BJ (cell line): ENCODE measurements at regions of chr3 and their contacts with region 1.

Region 1: DNA sequence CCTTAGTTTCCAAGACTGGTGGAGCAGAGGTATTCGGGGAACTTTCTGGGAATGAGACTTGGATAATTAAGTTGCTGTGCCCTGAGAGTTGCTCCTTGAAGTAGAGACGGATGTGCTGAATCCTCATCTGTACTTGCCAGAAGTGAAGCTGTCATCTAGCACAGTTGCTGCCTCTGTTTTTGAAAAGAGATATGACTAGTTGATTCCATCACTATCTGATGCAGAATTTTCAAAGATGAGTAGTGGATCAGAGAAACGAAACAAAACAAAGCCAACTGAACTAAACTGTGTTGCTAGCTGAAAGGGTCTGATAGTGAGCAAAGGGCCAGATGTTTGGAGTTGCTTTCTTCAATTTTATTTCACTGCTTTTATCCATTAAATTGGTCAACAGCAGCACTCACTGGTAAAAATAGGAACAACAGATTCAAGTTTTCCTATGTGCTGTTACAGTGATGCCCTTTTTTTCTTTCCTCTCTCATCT is 52.7 kb downstream of the MITF start:
- DNase-seq: no peak
- H3K4me3 ChIP-seq: no peak overlapping the region
- H3K27me3 ChIP-seq: no peaks in the 10 kb centered on the region
- CTCF ChIP-seq: peak; percentile 59

Region 2: DNA sequence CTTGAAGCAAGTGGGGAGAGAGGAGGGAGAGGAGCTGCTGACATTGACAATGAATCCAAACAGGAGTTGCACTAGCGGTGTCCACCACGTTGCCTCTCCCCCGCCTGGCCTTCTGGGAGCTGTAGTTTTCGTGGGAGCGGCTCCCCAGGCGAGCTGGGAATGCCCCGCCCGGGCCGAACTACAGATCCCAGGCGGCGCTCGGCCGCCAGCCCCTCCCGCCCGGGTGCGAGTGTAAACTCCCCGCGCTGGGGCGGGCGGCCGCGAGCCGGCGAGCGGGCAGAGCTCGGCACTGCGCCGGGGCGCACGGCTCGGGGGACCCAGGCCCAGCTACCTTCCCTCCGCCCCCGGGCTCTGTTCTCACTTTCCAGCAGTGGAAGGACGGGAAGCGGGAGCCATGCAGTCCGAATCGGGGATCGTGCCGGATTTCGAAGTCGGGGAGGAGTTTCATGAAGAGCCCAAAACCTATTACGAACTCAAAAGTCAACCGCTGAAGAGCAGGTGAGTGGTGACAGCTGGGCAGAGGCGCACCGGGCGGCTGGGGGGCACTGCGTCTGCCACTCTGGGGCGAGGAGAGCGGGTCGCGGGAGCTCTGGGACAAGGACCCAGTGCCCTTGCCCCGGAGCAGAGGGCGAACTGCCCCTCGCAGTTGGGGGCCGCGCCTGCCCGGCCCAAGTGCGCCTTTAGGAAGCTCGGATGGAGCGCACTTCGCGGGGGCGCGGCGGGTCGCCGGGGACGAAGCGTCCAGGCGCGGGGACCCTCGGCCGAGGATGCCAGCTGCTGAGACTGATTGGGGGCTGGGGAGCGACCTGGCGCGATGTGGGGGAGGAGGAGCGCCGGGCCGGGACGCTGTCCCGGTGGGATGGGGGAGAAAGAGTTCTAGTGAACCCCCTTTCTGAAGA is 52.5 kb before region 1 on chr3 and contains the start of gene MITF:
- CTCF ChIA-PET with region 1: interaction called, 12 read pairs
- POLR2A ChIA-PET with region 1: no interaction called
- DNase-seq: no peak
- H3K4me3 ChIP-seq: peak within 1 kb of the TSS; percentile 93
- H3K27me3 ChIP-seq: peaks cover 1% of the 10 kb centered on the region; the same call in 1 of the 2 replicates
- CTCF ChIP-seq: no peak
- polyA plus RNA-seq, gene MITF: 27.9 and 30.9 TPM in 2 replicates

Region 3: DNA sequence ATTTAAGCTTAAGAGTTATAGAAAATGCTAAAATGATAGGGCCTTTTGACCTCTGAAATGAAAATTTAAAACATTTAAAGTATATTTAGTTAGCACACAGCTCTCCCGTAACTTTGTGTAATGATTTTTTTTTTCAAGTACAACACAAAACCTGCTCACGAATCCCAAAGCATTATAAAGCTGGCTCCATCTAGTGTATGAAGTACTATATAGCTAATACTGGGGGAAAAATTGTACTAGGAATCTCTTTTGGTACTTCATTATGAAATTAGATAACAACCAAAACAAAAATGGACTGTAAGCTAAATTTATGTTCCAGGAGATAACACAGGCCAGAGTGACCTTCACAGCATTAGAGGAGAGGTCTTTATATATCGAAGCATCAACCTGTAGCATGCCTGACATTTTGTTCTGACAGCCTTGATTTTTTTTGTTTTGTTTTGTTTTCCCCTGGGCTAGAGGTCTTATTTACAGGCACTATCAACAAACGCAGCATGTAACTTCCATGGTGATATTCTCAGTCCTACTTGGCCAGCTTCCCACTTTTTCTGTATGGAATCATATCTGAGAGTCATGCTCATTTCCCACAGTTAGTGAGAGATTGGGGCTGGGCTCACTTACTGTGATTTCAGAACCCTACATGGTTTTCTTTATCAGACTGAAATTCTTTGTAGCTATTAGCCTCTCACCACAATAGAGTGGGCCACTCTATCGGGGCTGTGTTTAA is 63.6 kb after region 1 on chr3:
- CTCF ChIA-PET with region 1: interaction called, 13 read pairs
- POLR2A ChIA-PET with region 1: no interaction called
- DNase-seq: no peak
- H3K4me3 ChIP-seq: no peak overlapping the region
- H3K27me3 ChIP-seq: no peaks in the 10 kb centered on the region
- CTCF ChIP-seq: peak; percentile 57